A549 (cell line): ENCODE measurements at regions of chr5 and their contacts with region 1.

Region 1: GRCh38 chr5:179749857-179750508 is 17.4 kb downstream of the MAML1 start:
- DNase-seq: no peak
- ATAC-seq: peak; percentile 64 to 67; a peak in 4 of 6 replicates
- H3K4me3 ChIP-seq: no peak overlapping the region
- H3K27ac ChIP-seq: no peak overlapping the region
- H3K4me1 ChIP-seq: peaks cover 10% of the 10 kb centered on the region
- CTCF ChIP-seq: no peak
- EP300 ChIP-seq: no peak
- POLR2A ChIP-seq: no peak
- RAD21 ChIP-seq: no peak

Region 2: DNA sequence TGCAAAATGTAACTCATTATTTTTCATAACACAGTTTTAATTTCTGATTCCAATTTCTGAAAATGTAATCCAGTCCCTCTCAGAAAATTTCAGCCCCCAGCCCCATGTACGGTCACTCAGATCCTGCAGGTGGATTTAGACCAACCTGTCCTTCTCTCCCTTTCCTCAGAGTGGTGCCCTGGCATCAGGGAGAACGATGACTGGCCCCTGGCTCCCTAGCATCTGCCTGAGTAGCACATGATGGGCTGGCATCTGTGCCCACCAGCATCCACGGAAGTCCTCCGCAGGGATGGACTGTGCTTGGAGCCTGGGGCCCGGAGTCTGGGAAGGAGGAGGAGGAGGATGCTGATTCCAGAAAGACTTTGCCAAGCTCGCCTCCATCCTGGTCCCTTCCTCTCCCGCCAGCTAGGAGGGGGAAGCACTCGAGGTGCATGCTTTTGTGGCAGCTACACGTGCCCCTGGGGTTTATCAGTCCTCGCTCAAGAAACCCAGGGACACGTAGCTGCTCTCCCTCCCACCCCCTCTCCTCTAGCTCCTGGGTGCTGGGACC is 254.0 kb before region 1 on chr5:
- CTCF ChIA-PET with region 1: no interaction called
- POLR2A ChIA-PET with region 1: no interaction called
- DNase-seq: peak in 1 of 2 experiments; percentile 21
- ATAC-seq: peak; percentile 73 to 77; a peak in 4 of 6 replicates
- H3K4me3 ChIP-seq: no peak overlapping the region
- H3K27ac ChIP-seq: no peak overlapping the region
- H3K4me1 ChIP-seq: no peaks in the 10 kb centered on the region
- CTCF ChIP-seq: peak; percentile 13; the same call in 2 of the 3 replicates
- EP300 ChIP-seq: no peak
- POLR2A ChIP-seq: no peak
- RAD21 ChIP-seq: peak; percentile 37 to 56; a peak in 3 of 5 replicates

Region 3: DNA sequence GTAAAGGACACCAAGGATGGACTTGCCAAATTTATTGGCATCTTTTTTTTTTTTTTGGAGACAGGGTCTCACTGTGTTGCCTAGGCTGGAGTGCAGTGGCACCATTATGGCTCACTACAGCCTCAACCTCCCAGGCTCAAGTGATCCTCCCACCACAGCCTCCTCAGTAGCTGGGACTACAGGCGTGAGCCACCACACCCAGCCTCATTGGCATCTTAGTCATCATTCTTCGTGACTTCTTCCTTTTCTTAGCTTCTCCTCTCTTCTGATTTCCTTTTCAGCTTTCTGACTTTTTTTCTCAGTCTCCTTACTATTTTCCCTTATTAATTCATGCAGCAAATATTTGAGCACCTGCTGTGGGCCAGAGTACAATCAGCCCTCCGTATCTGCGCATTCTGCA is 11.2 kb before region 1 on chr5:
- CTCF ChIA-PET with region 1: interaction called, 11 read pairs
- POLR2A ChIA-PET with region 1: interaction called, 7 read pairs
- DNase-seq: no peak
- ATAC-seq: no peak
- H3K4me3 ChIP-seq: no peak overlapping the region
- H3K27ac ChIP-seq: no peak overlapping the region
- H3K4me1 ChIP-seq: peaks cover 12% of the 10 kb centered on the region
- CTCF ChIP-seq: no peak
- EP300 ChIP-seq: no peak
- POLR2A ChIP-seq: no peak
- RAD21 ChIP-seq: no peak